Body of pancreas (tissue), 4 donors: ENCODE measurements at regions of chr3 and their contacts with region 1.

Region 1: GRCh38 chr3:168847291-168847883 is 751.7 kb upstream of the GOLIM4 start:
- DNase-seq: peak in 2 of 4 donors; percentile 13 to 16
- ATAC-seq: no peak
- H3K4me3 ChIP-seq: no peak overlapping the region
- H3K27ac ChIP-seq: no peak overlapping the region
- H3K4me1 ChIP-seq: no peaks in the 10 kb centered on the region
- H3K27me3 ChIP-seq: peaks cover 0 to 3% of the 10 kb centered on the region in 2 donors
- CTCF ChIP-seq: peak; percentile 38 to 79 (median 70)
- POLR2A ChIP-seq: no peak

Region 2: DNA sequence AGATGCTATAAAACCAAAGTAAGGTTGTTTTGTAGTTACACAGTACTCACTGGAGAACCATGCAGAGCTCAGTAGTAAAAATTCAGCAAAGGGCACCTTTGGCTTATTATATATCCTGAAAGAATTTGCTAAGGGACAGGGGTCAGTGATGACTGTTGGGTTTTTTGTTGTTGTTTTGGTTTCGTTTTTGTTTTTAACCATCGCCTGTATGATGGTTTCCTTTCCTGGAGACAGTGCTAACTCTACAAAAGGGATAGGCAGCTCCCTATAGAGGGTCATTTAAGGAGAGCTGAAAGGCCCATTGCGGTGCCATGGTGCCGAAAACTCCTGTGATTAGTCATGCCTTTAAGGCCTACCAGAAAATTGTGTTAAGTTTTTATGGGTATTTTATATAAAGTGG is 633.5 kb before region 1 on chr3:
- intact Hi-C with region 1: loop called (anchors 10 kb)
- DNase-seq: no peak
- ATAC-seq: no peak
- H3K4me3 ChIP-seq: no peak overlapping the region
- H3K27ac ChIP-seq: no peak overlapping the region
- H3K4me1 ChIP-seq: no peaks in the 10 kb centered on the region
- H3K27me3 ChIP-seq: no peaks in the 10 kb centered on the region
- CTCF ChIP-seq: no peak
- POLR2A ChIP-seq: no peak